Sciatic nerve (tissue), 2 donors: ENCODE measurements at regions of chr11 and their contacts with region 1.

Region 1: GRCh38 chr11:113457784-113458183 is 17.4 kb downstream of the DRD2 start:
- DNase-seq: no peak
- ATAC-seq: no peak

Region 2: DNA sequence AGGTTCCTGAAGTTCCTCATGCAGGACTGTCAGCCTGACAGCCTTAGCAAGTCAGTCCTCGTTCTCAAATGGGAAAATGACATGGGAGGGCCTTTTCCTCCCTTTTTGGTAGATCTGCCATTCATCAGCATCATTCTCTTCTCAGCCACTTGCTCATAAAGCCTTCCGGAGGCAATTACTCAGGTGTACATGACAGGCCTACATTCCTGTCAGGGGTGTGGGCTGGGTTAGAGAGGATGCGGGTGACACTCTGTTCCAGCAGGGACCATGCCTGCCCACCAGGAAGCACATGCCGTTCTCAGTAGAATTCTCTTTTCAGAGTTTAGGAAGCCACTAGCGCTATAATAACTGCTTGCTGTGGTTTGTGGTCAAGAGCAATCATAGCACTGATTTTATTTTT is 94.4 kb before region 1 on chr11:
- intact Hi-C with region 1: no loop called
- DNase-seq: no peak
- ATAC-seq: no peak

Region 3: GRCh38 chr11:113532697-113533424 is 75.1 kb after region 1 on chr11:
- intact Hi-C with region 1: loop called (anchors 2 kb)
- DNase-seq: peak; percentile 91
- ATAC-seq: peak; percentile 87